Caco-2 (cell line): ENCODE measurements at regions of chr10 and their contacts with region 1.

Region 1: DNA sequence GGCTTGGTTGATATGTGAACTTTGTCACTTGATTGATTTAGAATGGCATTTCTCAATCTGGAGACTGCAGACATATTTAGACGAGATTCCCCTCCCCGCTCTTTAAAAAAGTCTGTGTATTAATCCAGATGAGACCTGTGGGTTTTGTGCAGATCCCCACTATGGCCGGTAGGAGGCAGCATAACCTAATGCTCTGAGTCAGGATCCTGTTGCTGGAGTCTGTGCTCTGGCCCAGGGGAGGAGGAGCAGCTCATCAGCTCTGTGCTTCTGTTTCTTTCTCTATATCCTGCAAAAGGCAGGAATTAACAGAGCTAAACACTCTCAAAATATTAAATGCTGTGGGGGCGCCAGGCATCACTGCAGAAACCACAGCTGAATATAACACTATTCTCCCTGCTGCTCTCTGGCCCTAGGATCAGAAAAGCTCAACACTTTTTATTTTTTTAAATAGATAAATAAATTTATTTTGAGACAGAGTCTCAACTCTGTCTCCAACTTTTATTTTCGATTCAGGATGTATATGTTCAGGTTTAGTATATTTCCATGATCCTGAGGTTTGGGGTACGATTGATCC is 23.9 kb upstream of the SEPHS1 start:
- DNase-seq: peak; percentile 88 to 90
- H3K4me3 ChIP-seq: no peak overlapping the region
- H3K4me3 Mint-ChIP-seq: no peak overlapping the region
- H3K27ac Mint-ChIP-seq: no peak overlapping the region
- H3K4me1 ChIP-seq: peaks cover 10% of the 10 kb centered on the region
- H3K4me1 Mint-ChIP-seq: peaks cover 24% of the 10 kb centered on the region
- H3K27me3 ChIP-seq: no peaks in the 10 kb centered on the region
- H3K27me3 Mint-ChIP-seq: no peaks in the 10 kb centered on the region
- CTCF ChIP-seq: peak; percentile 99

Region 2: DNA sequence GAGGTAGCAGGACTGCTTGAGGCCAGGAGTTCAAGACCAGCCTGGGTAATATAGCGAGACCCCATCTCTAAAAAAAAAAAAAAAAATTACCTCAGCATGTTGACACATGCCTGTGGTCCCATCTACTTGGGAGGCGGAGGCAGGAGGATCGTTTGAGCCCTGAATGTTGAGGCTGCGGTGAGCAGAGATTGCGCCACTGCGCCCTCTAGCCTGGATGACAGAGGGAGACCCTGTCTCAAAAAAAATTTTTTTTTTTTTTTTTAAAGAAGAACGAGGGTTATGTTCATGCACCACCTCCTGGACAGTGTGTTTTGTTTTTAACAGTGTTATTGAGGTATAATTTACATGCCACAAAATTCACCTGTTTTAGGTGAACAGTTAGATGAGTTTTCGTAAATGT is 27.3 kb after region 1 on chr10:
- CTCF ChIA-PET with region 1: interaction called, 6 read pairs
- POLR2A ChIA-PET with region 1: no interaction called
- intact Hi-C with region 1: loop called (anchors 1 kb)
- DNase-seq: peak in 1 of 2 experiments; percentile 45
- H3K4me3 ChIP-seq: no peak overlapping the region
- H3K4me3 Mint-ChIP-seq: no peak overlapping the region
- H3K27ac Mint-ChIP-seq: no peak overlapping the region
- H3K4me1 ChIP-seq: peaks cover 2% of the 10 kb centered on the region; the same call in 1 of the 2 replicates
- H3K4me1 Mint-ChIP-seq: peaks cover 15% of the 10 kb centered on the region
- H3K27me3 ChIP-seq: no peaks in the 10 kb centered on the region
- H3K27me3 Mint-ChIP-seq: no peaks in the 10 kb centered on the region
- CTCF ChIP-seq: no peak

Region 3: GRCh38 chr10:13440185-13441061 is 68.4 kb after region 1 on chr10:
- CTCF ChIA-PET with region 1: interaction called, 157 read pairs
- POLR2A ChIA-PET with region 1: interaction called, 3 read pairs
- intact Hi-C with region 1: loop called (anchors 1 kb)
- DNase-seq: peak; percentile 63 to 85
- H3K4me3 ChIP-seq: peak overlapping the region; percentile 36
- H3K4me3 Mint-ChIP-seq: peak overlapping the region; percentile 73
- H3K27ac Mint-ChIP-seq: no peak overlapping the region
- H3K4me1 ChIP-seq: 0 out of 2 replicates have a peak, but pooled peaks cover 6% of the 10 kb centered on the region
- H3K4me1 Mint-ChIP-seq: peaks cover 7% of the 10 kb centered on the region
- H3K27me3 ChIP-seq: no peaks in the 10 kb centered on the region; the same call in 1 of the 2 replicates
- H3K27me3 Mint-ChIP-seq: peaks cover 7% of the 10 kb centered on the region
- CTCF ChIP-seq: peak; percentile 98 to 99

Region 4: DNA sequence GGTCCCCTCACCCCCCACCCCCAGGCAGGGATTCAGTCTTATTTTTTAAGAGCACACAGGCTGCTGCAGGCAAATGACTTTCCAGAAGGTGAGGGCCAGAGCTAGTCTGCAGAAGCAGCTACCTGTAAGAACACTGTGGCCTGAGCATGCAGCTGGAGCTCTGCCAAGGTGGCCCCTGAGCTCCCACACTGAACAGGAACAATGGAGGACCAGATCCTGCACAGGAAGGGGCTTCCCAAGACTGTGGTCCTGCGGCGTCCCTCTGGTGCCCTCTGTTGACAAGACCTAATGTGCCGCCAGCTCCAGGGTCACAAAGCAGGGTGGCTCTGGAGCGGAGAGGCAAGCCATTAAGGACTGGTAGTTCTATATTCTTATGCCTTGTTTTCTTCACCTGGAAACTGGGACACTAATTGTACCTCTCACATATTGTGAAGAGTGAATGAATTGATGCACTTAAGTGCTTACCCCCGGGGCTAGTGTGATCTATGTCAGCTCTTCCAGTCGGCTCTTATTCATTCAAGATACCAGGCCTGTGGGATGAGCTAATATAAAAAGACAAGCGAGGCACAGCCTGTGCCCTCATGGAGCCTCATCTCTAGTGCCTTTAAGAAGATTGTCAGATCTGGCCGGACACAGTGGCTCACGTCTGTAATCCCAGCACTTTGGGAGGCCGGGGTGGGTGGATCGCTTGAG is 164.8 kb after region 1 on chr10:
- CTCF ChIA-PET with region 1: interaction called, 31 read pairs
- POLR2A ChIA-PET with region 1: no interaction called
- intact Hi-C with region 1: loop called (anchors 1 kb)
- DNase-seq: peak; percentile 84 to 85
- H3K4me3 ChIP-seq: no peak overlapping the region
- H3K4me3 Mint-ChIP-seq: no peak overlapping the region
- H3K27ac Mint-ChIP-seq: no peak overlapping the region
- H3K4me1 ChIP-seq: peaks cover 8% of the 10 kb centered on the region
- H3K4me1 Mint-ChIP-seq: peaks cover 10% of the 10 kb centered on the region
- H3K27me3 ChIP-seq: no peaks in the 10 kb centered on the region
- H3K27me3 Mint-ChIP-seq: peaks cover 6% of the 10 kb centered on the region
- CTCF ChIP-seq: peak; percentile 85 to 93